Heart right ventricle (tissue), 16 donors: ENCODE measurements at regions of chr2 and their contacts with region 1.

Region 1: DNA sequence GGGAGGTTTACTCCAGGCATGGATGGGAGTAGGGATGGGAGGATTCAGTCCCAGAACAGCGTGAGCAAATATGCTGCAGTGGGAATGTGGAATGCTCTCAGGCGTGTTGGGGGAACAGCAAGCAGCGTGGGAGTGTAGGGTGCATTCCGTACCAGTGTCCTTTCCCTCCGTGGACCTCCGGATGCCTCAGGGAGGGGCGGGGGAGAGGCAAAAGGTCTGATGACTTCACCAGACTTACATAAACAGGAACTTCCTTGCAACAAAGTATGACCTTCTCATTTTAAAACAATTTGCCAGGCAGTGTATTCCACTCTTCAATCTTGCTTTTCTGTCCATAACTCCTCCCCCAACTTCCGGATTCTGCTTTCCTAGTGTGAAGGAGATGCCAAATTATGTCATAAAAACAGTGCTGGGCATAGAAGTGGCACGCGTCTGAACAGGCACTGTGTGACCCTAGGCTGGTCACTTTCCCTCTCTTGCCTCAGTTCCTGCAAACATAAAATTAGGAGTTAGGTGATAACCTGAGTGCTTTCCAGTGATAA is 36.9 kb downstream of the RPL37A start:
- DNase-seq: peak; percentile 67 to 78
- ATAC-seq: peak; percentile 72 to 92 (median 82)
- H3K4me3 ChIP-seq: peak overlapping the region in 4 of 10 donors; percentile 1 to 14 (median 6)
- H3K27ac ChIP-seq: peak overlapping the region; percentile 65 to 91 (median 84)
- H3K4me1 ChIP-seq: peaks cover 21 to 76% (median 60%) of the 10 kb centered on the region in 9 donors
- H3K27me3 ChIP-seq: no peaks in the 10 kb centered on the region
- CTCF ChIP-seq: no peak

Region 2: GRCh38 chr2:216572582-216573578 is 37.4 kb after region 1 on chr2:
- intact Hi-C with region 1: loop called in 3 of 10 experiments (anchors 2 to 5 kb)
- DNase-seq: peak; percentile 78 to 94
- ATAC-seq: peak; percentile 88 to 97 (median 96)
- H3K4me3 ChIP-seq: no peak overlapping the region
- H3K27ac ChIP-seq: peak overlapping the region; percentile 63 to 89 (median 86)
- H3K4me1 ChIP-seq: peaks cover 5 to 35% (median 25%) of the 10 kb centered on the region in 9 donors
- H3K27me3 ChIP-seq: no peaks in the 10 kb centered on the region
- CTCF ChIP-seq: no peak

Region 3: DNA sequence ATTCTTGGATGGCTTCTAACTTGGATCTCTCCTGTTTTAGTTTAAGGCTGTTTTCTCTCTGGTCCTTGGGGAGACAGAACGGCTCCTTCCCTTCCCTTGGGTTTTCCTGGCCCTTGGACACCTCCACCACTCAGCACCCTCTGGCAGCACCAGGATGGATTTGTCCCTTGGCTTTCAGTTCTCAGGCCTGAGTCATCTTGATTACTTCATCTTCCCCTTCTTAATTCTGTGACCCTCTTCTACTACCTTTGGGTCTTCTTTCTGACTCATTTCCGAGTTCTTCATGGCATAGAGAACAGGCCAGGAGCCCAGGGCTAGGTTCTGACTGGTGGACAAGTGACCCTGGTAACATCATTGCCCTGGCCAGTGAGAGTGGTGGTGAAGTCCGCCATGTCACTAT is 112.6 kb after region 1 on chr2:
- intact Hi-C with region 1: loop called in 1 of 10 experiments (anchors 5 kb)
- DNase-seq: no peak
- ATAC-seq: no peak
- H3K4me3 ChIP-seq: no peak overlapping the region
- H3K27ac ChIP-seq: no peak overlapping the region
- H3K4me1 ChIP-seq: peaks cover 8 to 49% (median 27%) of the 10 kb centered on the region in 9 donors
- H3K27me3 ChIP-seq: no peaks in the 10 kb centered on the region
- CTCF ChIP-seq: no peak